ENCODE measurements at regions of chr11 and their contacts with region 1.

Region 1: GRCh38 chr11:119334174-119334930 is at the start of gene RNF26:
- H3K4me3 ChIP-seq: peak within 1 kb of the TSS; percentile 90
- H3K27ac ChIP-seq: peak within 1 kb of the TSS; percentile 18; the same call in 1 of the 2 replicates
- H3K4me1 ChIP-seq: no peaks in the 10 kb centered on the region
- CTCF ChIP-seq: no peak

Region 2: DNA sequence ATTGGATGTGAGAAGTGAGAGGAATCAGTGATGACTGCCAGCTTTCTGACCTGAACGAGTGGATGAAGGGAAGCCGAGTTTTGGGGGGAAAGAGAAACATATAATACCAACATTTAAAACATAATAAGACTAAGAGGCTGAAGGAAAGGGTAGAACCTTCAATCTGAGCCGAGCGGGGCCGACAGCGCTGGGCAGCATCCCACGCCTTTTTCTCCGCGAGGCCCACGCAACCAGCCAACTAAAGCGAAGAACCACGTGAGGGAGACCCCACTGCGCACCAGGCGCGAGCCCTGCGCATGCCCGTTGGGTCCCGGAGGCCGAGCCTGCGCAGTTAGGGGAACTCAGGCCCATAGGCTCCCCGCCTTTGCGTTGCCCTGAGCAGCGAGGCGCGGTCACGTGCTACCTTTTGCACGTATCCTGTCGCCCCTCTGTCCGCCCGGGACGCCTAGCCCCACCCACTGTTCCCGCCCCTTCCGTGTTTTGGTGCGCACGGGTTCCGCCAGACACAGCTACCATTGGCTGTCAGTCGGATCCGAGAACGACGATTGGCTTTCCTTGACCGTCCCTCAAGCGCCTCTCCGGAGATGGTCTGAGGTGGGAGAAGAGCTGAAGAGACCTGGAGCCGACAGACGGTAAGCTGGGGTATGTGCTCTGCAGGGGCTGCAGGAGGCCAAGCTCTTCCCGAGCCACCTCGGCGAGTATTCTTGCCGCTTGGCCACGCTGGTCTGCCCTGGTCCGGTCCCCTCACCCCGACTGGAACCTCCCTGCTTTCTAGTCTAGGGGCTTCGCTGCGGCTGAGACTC is 213.1 kb before region 1 on chr11 and contains the start of gene HINFP:
- CTCF ChIA-PET with region 1: interaction called, 3 read pairs
- POLR2A ChIA-PET with region 1: interaction called, 18 read pairs
- H3K4me3 ChIP-seq: peak within 1 kb of the TSS; percentile 62
- H3K27ac ChIP-seq: peak within 1 kb of the TSS; percentile 21; the same call in 1 of the 2 replicates
- H3K4me1 ChIP-seq: peaks cover 4% of the 10 kb centered on the region; the same call in 1 of the 2 replicates
- CTCF ChIP-seq: no peak

Region 3: DNA sequence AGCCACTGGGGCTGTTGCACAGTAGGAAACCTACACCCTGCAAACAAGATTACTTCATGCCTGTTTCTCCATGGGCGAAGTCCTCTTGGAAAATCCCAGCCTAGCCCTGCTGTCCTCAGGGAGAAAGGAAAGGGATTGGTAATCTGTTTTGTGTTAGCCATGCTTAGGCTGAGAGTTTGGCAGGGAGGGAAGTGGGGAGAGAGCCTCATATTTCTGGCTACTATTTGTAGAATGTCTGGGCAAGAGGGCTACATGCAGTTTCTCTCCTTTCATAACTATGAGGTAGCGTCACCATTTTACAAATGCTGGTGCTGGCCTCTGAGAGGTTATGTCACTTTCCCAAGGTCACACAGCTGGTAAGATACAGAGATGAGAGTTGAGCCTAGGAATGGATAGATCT is 12.9 kb after region 1 on chr11:
- CTCF ChIA-PET with region 1: interaction called, 34 read pairs
- POLR2A ChIA-PET with region 1: interaction called, 9 read pairs
- H3K4me3 ChIP-seq: no peak overlapping the region
- H3K27ac ChIP-seq: no peak overlapping the region
- H3K4me1 ChIP-seq: no peaks in the 10 kb centered on the region
- CTCF ChIP-seq: no peak

Region 4: DNA sequence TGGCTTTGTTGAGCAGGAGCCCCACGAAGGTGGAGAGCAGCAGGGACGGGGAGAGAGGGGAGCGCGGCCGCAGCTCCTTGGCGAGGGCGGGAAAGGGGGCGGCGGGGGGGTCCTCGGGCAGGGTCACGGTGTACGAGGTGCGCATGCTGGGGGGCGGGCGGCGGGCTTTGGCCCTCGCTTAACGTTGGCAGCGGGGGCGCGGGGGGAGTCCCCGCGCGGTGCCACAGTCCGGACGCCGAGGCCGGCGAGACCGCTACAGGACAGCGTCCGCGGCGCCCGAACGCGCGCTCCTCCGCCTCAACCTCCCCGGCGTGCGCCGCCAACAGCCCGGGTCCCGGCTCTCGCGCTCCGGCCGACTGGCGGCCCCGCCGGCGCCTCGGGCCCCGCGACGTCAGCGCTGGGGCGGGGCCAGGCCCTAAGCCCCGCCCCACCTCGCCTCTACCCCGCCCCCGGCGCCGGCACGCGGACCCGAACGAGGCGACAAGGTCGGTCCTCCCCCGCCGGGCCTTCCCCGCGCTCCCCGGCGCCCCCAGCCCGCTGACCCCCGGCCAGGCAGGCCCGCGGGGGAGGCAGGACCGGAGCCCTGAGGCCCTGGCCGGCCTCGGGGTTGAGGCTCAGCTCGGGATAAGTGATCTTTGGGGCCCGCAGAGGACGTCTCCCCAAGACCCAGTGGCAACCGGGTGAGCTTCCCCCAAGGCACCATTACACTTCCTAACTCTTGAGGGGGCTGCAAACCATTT is 29.7 kb after region 1 on chr11:
- CTCF ChIA-PET with region 1: interaction called, 59 read pairs
- POLR2A ChIA-PET with region 1: interaction called, 39 read pairs
- H3K4me3 ChIP-seq: peak overlapping the region; percentile 32
- H3K27ac ChIP-seq: no peak overlapping the region; the same call in 1 of the 2 replicates
- H3K4me1 ChIP-seq: peaks cover 9% of the 10 kb centered on the region
- CTCF ChIP-seq: no peak

Region 5: DNA sequence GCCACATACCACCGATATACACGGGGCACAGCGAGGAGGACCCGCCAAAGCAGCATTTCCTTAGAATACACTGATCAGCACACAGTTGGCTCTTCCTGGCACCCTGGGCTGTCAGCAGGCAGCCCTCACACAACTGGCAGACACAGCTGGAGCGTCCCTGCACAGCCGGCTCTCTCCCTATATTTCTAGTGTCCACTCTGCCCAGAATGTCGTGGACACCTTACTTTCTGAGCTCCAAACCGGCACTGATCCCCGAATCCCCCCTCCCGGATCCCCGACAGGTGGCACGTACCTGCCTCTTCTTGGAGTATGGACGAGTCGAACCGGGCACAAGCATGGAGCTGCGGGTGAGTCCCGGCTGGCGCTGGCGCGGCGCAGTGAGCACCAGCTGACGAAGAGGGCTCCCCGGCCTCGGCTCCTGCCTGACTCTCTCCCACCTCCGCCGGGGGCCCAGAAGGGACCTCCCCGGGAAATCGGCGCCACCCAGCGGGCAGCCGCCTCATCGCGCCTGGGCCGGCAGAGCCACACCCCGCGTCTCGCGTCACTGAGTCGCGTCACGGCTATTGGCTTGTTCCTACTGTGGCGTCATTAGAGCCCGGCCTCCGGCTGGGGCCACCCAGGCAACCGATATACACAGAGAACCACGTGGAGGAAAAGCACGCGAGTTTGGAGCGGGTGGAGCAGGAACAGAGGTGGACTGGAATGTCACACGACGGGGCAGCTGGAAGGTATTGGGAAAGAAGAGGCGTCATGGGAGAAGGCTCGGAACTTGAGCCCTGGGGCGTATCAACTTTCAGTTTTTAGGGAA is 47.0 kb after region 1 on chr11 and contains the start of gene USP2:
- CTCF ChIA-PET with region 1: interaction called, 160 read pairs
- POLR2A ChIA-PET with region 1: interaction called, 9 read pairs
- H3K4me3 ChIP-seq: peak within 1 kb of the TSS; percentile 45
- H3K27ac ChIP-seq: no peak within 1 kb of the TSS
- H3K4me1 ChIP-seq: no peaks in the 10 kb centered on the region; the same call in 1 of the 2 replicates
- CTCF ChIP-seq: peak; percentile 95